ENCODE measurements at regions of chr2 and their contacts with region 1.

Region 1: DNA sequence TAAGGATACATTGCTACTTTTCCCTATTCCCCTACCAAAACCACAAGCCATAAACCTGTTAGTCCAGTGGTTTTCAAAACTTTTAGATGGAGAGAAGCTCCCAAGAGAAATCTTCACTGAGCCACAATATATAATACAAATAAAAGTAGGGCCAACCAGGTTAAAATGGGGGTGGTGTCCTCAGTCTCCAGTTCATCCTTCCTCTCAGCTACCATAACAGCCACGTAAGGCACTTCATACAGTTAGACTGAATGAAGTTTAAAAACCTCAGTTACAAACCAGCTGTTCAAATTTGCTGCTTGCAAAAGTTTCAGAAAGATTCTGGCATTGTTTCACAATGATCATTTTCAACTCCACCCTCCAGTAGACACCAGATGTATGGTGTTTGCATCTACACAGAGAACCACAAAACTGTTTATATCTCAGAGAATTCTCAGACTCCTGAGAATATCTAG is 26.0 kb downstream of the SOS1 start:
- DNase-seq: peak; percentile 73
- H3K4me3 ChIP-seq: no peak overlapping the region
- H3K27ac ChIP-seq: no peak overlapping the region
- H3K27me3 ChIP-seq: no peaks in the 10 kb centered on the region
- CTCF ChIP-seq: no peak

Region 2: GRCh38 chr2:38835015-38835601 is 259.8 kb before region 1 on chr2:
- CTCF ChIA-PET with region 1: no interaction called
- POLR2A ChIA-PET with region 1: no interaction called
- DNase-seq: no peak
- H3K4me3 ChIP-seq: no peak overlapping the region
- H3K27ac ChIP-seq: no peak overlapping the region
- H3K27me3 ChIP-seq: no peaks in the 10 kb centered on the region
- CTCF ChIP-seq: peak; percentile 50

Region 3: GRCh38 chr2:39059366-39059952 is 35.4 kb before region 1 on chr2:
- CTCF ChIA-PET with region 1: interaction called, 14 read pairs
- POLR2A ChIA-PET with region 1: no interaction called
- DNase-seq: peak; percentile 18
- H3K4me3 ChIP-seq: no peak overlapping the region
- H3K27ac ChIP-seq: no peak overlapping the region
- H3K27me3 ChIP-seq: no peaks in the 10 kb centered on the region
- CTCF ChIP-seq: peak; percentile 61

Measured in AG04450 (cell line).